HEK293 (cell line): ENCODE measurements at regions of chr6 and their contacts with region 1.

Region 1: GRCh38 chr6:31079656-31080261 is 32.6 kb downstream of the C6orf15 start:
- H3K4me3 ChIP-seq: 0 out of 2 replicates have a peak overlapping the region, but pooled peaks have one; percentile 16
- H3K27ac ChIP-seq: no peak overlapping the region
- H3K4me1 ChIP-seq: 0 out of 2 replicates have a peak, but pooled peaks cover 6% of the 10 kb centered on the region
- CTCF ChIP-seq: peak; percentile 49; the same call in 1 of the 2 replicates

Region 2: GRCh38 chr6:30836431-30836866 is 243.3 kb before region 1 on chr6:
- CTCF ChIA-PET with region 1: interaction called, 111 read pairs
- POLR2A ChIA-PET with region 1: interaction called, 4 read pairs
- H3K4me3 ChIP-seq: no peak overlapping the region
- H3K27ac ChIP-seq: no peak overlapping the region
- H3K4me1 ChIP-seq: peaks cover 9% of the 10 kb centered on the region; the same call in 1 of the 2 replicates
- CTCF ChIP-seq: no peak

Region 3: GRCh38 chr6:30907758-30908591 is 171.8 kb before region 1 on chr6 and contains the start of gene GTF2H4:
- CTCF ChIA-PET with region 1: interaction called, 206 read pairs
- POLR2A ChIA-PET with region 1: interaction called, 5 read pairs
- H3K4me3 ChIP-seq: peak within 1 kb of the TSS; percentile 91
- H3K27ac ChIP-seq: peak within 1 kb of the TSS; percentile 61
- H3K4me1 ChIP-seq: no peaks in the 10 kb centered on the region; the same call in 1 of the 2 replicates
- CTCF ChIP-seq: peak; percentile 52; the same call in 1 of the 2 replicates

Region 4: GRCh38 chr6:30942338-30943060 is 137.3 kb before region 1 on chr6:
- CTCF ChIA-PET with region 1: interaction called, 13 read pairs
- POLR2A ChIA-PET with region 1: interaction called, 4 read pairs
- H3K4me3 ChIP-seq: no peak overlapping the region
- H3K27ac ChIP-seq: no peak overlapping the region
- H3K4me1 ChIP-seq: no peaks in the 10 kb centered on the region; the same call in 1 of the 2 replicates
- CTCF ChIP-seq: peak; percentile 63; the same call in 1 of the 2 replicates

Region 5: GRCh38 chr6:31058128-31058894 is 21.4 kb before region 1 on chr6:
- CTCF ChIA-PET with region 1: interaction called, 25 read pairs
- POLR2A ChIA-PET with region 1: no interaction called
- H3K4me3 ChIP-seq: no peak overlapping the region
- H3K27ac ChIP-seq: no peak overlapping the region
- H3K4me1 ChIP-seq: no peaks in the 10 kb centered on the region
- CTCF ChIP-seq: peak; percentile 47; the same call in 1 of the 2 replicates

Region 6: GRCh38 chr6:31094389-31094881 is 14.7 kb after region 1 on chr6:
- CTCF ChIA-PET with region 1: interaction called, 37 read pairs
- POLR2A ChIA-PET with region 1: no interaction called
- H3K4me3 ChIP-seq: no peak overlapping the region
- H3K27ac ChIP-seq: no peak overlapping the region
- H3K4me1 ChIP-seq: no peaks in the 10 kb centered on the region
- CTCF ChIP-seq: no peak

Region 7: GRCh38 chr6:31128093-31128676 is 48.4 kb after region 1 on chr6:
- CTCF ChIA-PET with region 1: interaction called, 54 read pairs
- POLR2A ChIA-PET with region 1: no interaction called
- H3K4me3 ChIP-seq: no peak overlapping the region
- H3K27ac ChIP-seq: no peak overlapping the region
- H3K4me1 ChIP-seq: 0 out of 2 replicates have a peak, but pooled peaks cover 3% of the 10 kb centered on the region
- CTCF ChIP-seq: peak; percentile 57; the same call in 1 of the 2 replicates